ENCODE measurements at regions of chr3 and their contacts with region 1.

Region 1: DNA sequence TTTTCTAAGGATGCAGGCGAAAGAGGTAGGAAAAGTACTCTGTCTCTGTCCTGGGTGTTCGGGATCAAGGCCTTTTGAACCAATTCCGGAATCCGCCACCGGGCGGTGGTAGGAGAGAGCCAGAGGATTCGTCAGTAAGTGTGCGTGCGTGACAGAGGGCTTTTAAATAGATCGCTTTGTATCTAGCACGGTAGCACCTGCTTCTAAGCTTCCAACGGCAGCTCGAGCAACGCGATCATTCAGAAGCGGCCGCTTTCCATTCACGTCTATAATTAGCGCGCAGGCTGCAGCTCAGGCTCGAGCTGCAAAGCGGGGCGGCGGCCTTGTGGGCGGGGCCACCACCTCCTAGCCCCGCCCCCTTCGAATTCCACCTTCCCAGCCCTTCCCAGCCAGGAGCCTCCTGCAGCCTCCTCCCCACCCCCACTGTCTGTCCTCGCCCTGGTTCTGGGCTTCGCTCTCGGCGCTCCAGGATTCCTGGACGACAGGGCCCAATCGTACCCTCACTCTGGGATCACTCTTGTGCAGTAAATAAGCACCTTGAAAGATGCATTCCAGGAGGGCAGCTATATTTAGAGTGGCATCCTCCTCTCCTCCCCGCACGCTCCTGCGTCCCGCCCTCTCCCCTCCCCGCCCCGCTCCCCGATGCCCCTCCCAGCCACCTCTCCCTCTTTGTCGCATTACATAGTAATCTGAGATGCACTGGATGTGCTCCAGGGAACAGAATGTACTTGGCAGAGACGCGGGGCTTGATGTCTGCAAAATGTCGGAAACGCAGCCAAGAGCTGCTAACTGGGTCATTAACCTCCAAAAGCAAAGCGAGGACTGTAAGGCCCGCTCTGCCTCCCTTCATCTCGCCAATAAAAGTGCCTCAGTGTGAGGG is 224.1 kb upstream of the TPRG1 start:
- DNase-seq: peak; percentile 97 to 99
- ATAC-seq: peak; percentile 78 to 84
- H3K4me3 ChIP-seq: peak overlapping the region; percentile 47 to 58 (median 54)
- H3K27ac ChIP-seq: peak overlapping the region; percentile 92 to 98 (median 98)
- H3K4me1 ChIP-seq: peaks cover 44% of the 10 kb centered on the region in 2 donors
- H3K27me3 ChIP-seq: no peaks in the 10 kb centered on the region
- CTCF ChIP-seq: peak; percentile 48 to 75 (median 60)
- POLR2A ChIP-seq: peak; percentile 67 to 77

Region 2: GRCh38 chr3:187738331-187739093 is 1209.1 kb before region 1 on chr3:
- in situ Hi-C with region 1: loop called in 1 of 4 experiments (anchors 10 kb)
- intact Hi-C with region 1: loop called (anchors 1 kb)
- DNase-seq: peak; percentile 92 to 93
- ATAC-seq: peak; percentile 34 to 37
- H3K4me3 ChIP-seq: peak overlapping the region; percentile 70 to 94 (median 88)
- H3K27ac ChIP-seq: peak overlapping the region; percentile 95 to 100 (median 98)
- H3K4me1 ChIP-seq: peaks cover 40% of the 10 kb centered on the region in 2 donors
- H3K27me3 ChIP-seq: no peaks in the 10 kb centered on the region
- CTCF ChIP-seq: peak; percentile 66 to 82 (median 72)
- POLR2A ChIP-seq: peak; percentile 54 to 64

Region 3: DNA sequence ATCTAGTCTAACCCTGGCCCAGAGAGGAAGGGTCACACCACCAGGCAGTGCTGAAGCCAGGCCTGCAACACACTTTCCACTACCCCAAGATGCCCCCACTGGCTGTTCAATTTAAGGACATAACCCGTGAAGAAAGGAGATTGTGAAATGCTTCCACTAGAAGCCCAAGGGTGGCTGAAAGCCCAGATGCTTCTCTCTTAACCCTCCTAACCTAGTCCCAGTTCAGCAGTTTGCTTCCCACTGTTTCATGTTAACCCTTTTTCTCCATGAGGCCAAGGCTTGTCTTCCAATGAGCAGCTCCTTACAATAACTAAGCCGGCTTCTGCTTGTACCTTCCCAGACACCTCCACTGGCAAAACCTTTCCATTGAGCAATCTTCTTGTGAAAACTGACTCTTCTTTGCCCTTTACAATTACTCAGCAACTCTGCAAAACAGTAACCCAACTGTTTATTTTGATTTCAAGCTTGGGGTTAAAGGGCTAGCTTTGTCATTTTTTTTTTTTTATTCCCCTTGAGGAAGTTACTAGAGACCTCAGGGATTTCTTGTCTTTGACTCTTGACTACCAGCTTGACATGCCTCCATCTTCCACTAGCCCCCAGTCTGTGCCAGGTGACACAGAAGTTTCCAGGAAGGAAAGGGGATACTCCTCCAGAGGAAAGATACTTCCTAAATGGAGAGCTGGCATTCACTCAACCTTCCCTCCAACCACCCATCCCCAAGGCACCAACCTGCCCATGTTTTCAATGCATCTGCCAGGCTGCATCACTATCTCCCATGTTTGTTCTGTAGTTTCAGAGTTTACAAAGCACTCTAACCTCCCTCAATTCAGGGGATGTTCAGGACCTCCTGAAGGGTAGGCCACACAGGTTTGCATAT is 992.3 kb before region 1 on chr3:
- in situ Hi-C with region 1: no loop called
- intact Hi-C with region 1: loop called (anchors 5 kb)
- DNase-seq: peak; percentile 43 to 85
- ATAC-seq: peak; percentile 68 to 70
- H3K4me3 ChIP-seq: no peak overlapping the region
- H3K27ac ChIP-seq: peak overlapping the region; percentile 83 to 96 (median 94)
- H3K4me1 ChIP-seq: peaks cover 58 to 79% of the 10 kb centered on the region in 2 donors
- H3K27me3 ChIP-seq: no peaks in the 10 kb centered on the region
- CTCF ChIP-seq: no peak
- POLR2A ChIP-seq: no peak

Region 4: DNA sequence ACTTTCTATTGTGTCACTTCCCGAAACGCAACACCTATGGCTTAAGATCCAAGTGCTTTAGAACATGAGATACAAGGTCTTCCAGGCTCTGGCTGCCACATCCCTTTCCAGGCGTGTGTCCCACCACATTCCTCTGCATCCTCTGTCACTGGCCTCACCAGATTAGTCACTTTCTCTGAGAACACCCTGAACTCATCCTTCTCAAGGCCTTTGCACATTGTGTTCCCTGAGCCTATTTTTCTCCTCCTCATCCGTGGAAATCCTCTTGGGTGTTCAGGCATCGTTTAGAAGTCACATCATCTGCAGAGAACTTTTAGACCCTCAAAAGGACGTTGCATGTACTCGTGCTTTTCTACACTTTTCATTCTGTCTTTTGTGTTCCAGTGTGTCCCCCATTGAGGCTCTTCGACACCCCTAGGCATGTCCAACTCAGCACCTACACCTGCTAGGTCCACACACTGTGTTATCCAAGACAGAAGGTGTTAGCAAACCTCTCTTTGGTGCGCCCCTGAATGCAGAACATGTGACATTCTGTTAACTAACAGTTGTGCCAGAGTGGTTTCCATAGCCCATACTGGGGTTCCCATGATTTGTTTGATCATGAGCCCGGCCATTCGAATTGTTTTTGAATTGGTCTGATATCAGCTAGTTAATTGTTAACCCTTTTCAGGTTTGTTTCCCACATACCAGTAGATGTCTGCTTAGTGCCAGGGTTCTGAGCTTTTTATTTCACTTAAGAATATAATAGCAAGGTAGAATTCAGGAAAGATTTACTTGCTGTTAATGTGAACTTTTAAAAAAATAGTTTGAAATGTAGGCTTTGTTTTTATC is 726.4 kb before region 1 on chr3:
- in situ Hi-C with region 1: no loop called
- intact Hi-C with region 1: loop called (anchors 2 kb)
- DNase-seq: peak; percentile 95 to 98
- ATAC-seq: peak; percentile 93 to 95
- H3K4me3 ChIP-seq: no peak overlapping the region
- H3K27ac ChIP-seq: peak overlapping the region; percentile 91 to 97 (median 93)
- H3K4me1 ChIP-seq: peaks cover 70% of the 10 kb centered on the region in 2 donors
- H3K27me3 ChIP-seq: no peaks in the 10 kb centered on the region
- CTCF ChIP-seq: no peak
- POLR2A ChIP-seq: peak; percentile 56 to 77

Region 5: GRCh38 chr3:188348435-188349244 is 599.0 kb before region 1 on chr3:
- in situ Hi-C with region 1: loop called in 1 of 4 experiments (anchors 10 kb)
- intact Hi-C with region 1: loop called (anchors 5 kb)
- DNase-seq: peak in 1 of 2 donors; percentile 61
- ATAC-seq: peak; percentile 31 to 36
- H3K4me3 ChIP-seq: no peak overlapping the region
- H3K27ac ChIP-seq: peak overlapping the region; percentile 80 to 91 (median 86)
- H3K4me1 ChIP-seq: peaks cover 42 to 80% of the 10 kb centered on the region in 2 donors
- H3K27me3 ChIP-seq: no peaks in the 10 kb centered on the region
- CTCF ChIP-seq: no peak
- POLR2A ChIP-seq: no peak

Region 6: GRCh38 chr3:188683032-188683521 is 264.6 kb before region 1 on chr3:
- in situ Hi-C with region 1: loop called in 1 of 4 experiments (anchors 10 kb)
- intact Hi-C with region 1: loop called (anchors 2 kb)
- DNase-seq: peak; percentile 61 to 73
- ATAC-seq: peak; percentile 99 to 100
- H3K4me3 ChIP-seq: no peak overlapping the region
- H3K27ac ChIP-seq: peak overlapping the region; percentile 73 to 90 (median 78)
- H3K4me1 ChIP-seq: peaks cover 40 to 44% of the 10 kb centered on the region in 2 donors
- H3K27me3 ChIP-seq: no peaks in the 10 kb centered on the region
- CTCF ChIP-seq: no peak
- POLR2A ChIP-seq: peak; percentile 32 to 73

Region 7: DNA sequence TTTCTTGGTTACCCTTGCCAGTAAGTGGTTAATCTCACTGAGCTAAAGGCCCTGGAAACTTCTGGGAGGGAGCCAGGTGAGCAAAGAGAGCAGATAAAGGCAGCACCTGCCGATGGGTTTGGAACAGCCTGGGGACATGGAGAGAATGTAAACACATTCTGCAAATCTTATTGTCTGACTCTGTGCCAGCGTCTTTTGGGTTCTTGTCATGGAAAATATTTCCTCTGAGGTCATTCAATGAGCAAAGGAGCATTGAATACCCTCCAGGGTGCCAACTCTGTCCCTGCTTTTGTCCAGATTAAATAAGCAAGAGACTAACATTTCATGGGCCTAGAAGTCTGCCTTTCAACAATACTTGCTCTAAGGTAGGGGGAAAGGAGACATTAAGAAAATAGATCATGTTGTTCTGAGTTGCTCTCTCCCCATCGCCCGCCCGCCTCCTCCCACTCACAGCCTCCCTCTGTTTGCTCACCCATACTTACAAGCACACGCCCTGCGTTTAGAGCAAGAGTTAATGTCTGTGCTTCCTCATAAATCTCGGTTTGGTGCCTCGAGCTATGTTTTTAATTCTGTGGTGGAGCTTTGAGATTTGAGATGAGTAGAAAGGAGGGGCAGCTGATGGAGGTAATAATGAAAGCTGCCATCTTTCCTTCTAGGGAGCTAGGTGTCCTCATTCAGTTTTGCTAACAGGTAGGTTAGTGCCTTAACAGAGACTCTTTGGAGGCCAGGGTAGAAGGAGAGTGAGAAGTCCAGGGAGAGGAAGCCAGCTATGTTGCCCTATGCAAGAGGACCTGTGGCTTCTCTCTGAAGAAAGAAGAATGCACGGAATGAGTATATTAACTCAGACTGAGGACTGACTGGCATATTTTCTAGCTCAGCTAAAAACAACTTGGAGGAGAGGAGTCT is 357.1 kb after region 1 on chr3:
- in situ Hi-C with region 1: no loop called
- intact Hi-C with region 1: no loop called
- DNase-seq: no peak
- ATAC-seq: no peak
- H3K4me3 ChIP-seq: no peak overlapping the region
- H3K27ac ChIP-seq: peak overlapping the region in 1 of 4 donors; percentile 34
- H3K4me1 ChIP-seq: peaks cover 8 to 27% of the 10 kb centered on the region in 2 donors
- H3K27me3 ChIP-seq: no peaks in the 10 kb centered on the region
- CTCF ChIP-seq: no peak
- POLR2A ChIP-seq: no peak